Activated T-helper 2 cell treated with anti-CD3 and anti-CD28 coated beads, Interferon-gamma antibody, Interleukin-2, Interleukin-4, amounts not matched to agents 10 μg/mL and 5 μg/mL and 100 μg/mL, durations not matched to agents 14 hours and 24 hours and 36 hours (primary cell): ENCODE measurements at regions of chr3 and their contacts with region 1.

Region 1: DNA sequence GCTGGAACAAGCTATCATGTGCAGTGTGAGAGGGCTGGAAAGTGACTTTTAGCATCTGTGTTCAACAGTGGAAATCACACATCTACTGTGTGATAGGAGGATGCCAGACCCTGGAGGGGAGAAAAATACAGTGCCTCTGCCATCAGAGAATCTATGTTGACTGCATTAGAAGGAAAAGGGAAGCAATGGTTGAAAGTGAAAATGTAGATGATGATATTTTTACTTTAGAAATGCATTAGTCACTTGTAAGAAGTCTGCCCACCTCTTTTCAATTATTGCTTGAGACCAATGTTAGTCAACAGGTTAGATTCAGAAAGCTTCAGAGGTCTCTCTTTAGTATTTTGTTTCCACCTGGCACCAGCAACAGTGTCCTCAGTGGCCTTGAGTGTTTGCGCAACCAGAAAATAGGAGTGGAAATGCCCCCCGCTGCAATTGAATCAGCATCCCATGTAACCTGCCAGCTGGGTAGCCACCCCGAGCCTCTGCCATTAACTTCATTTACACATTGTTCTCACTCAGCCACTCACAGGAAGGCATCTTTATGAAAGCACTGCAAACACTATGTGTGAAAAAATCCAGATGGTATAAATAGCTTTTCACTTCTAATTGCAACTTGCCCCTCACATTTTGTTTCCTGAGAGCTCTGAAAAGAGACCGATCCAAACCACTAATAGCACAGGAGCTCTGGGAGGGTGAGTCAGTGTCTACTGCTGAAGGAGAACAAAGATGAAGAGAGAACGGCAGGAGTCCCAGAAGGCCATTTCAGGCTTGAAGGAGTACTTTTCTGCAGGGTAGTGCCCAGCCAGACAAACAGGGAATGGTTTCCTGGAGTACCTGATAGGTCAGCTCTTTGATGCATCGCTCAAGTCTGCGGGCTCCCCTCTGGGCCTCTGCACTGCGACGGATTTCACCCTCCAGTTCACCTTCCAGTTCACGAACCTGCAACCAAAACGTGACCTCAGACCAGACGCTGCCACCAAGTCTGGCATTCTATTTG is 92.1 kb downstream of the HHLA2 start:
- DNase-seq: no peak
- H3K4me3 Mint-ChIP-seq: no peak overlapping the region
- H3K27ac Mint-ChIP-seq: peak overlapping the region; percentile 67
- H3K4me1 Mint-ChIP-seq: peaks cover 23% of the 10 kb centered on the region
- H3K27me3 Mint-ChIP-seq: peaks cover 19% of the 10 kb centered on the region

Region 2: DNA sequence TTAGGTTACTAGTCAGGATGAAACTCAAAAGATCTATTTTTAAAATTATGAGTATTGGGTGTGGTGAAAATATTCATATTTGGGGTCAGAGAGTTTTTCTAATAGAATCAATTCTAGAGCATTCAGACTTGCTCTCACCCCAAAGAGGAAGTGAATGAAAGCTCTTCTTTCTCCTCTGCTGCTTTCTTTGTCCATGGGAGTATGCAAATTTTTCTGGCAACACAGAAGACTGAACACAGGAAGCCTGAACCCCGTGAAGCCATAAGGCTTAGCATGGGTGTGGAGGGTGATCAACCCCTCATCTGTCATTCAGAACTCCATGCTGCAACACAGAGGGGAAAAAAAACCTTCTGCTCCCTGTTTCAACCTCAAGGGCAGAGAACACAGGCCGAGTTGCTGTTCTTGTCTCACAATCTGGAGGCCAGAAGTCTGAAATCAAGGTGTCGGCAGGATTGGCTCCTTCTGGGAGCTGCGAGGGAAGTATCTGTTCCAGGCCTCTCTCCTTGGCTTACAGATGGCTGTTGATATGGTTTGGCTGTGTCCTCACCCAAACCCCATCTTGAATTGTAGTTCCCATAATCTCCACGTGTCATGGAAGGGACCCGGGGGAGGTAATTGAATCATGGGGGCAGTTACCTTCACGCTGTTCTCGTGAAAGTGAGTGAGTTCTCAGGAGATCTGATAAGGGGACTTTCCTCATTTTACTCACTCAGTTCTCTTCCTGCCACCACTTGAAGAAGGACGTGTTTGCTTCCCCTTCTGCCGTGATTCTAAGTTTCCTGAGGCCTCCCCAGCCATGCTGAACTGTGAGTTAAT is 263.9 kb before region 1 on chr3:
- intact Hi-C with region 1: loop called (anchors 2 kb)
- DNase-seq: peak; percentile 68
- H3K4me3 Mint-ChIP-seq: peak overlapping the region; percentile 96
- H3K27ac Mint-ChIP-seq: peak overlapping the region; percentile 99
- H3K4me1 Mint-ChIP-seq: peaks cover 66% of the 10 kb centered on the region
- H3K27me3 Mint-ChIP-seq: no peaks in the 10 kb centered on the region

Region 3: DNA sequence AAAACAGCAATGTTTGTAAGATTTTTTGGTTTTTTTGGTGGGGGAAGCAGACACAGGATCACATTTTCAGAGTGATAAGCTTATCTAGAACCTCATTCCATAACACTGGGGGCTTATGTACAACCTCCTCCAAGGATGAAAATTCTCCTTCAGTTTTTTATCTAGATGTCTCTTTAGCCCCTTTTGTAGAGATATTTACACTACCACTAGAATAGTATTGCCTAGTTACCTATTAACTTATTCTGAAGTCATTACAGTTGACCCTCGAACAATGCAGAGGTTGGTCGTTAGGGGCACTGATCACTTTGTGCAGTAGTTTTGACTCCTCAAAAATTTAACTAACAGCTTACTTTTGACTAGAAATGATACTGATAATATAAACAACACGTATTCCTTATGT is 199.0 kb before region 1 on chr3:
- intact Hi-C with region 1: no loop called
- DNase-seq: no peak
- H3K4me3 Mint-ChIP-seq: no peak overlapping the region
- H3K27ac Mint-ChIP-seq: no peak overlapping the region
- H3K4me1 Mint-ChIP-seq: no peaks in the 10 kb centered on the region
- H3K27me3 Mint-ChIP-seq: no peaks in the 10 kb centered on the region

Region 4: GRCh38 chr3:108292905-108293328 is 95.5 kb before region 1 on chr3:
- intact Hi-C with region 1: loop called (anchors 1 kb)
- DNase-seq: no peak
- H3K4me3 Mint-ChIP-seq: no peak overlapping the region
- H3K27ac Mint-ChIP-seq: peak overlapping the region; percentile 80
- H3K4me1 Mint-ChIP-seq: peaks cover 60% of the 10 kb centered on the region
- H3K27me3 Mint-ChIP-seq: no peaks in the 10 kb centered on the region

Region 5: GRCh38 chr3:108328821-108329486 is 59.5 kb before region 1 on chr3:
- intact Hi-C with region 1: loop called (anchors 1 kb)
- DNase-seq: no peak
- H3K4me3 Mint-ChIP-seq: no peak overlapping the region
- H3K27ac Mint-ChIP-seq: peak overlapping the region; percentile 15
- H3K4me1 Mint-ChIP-seq: peaks cover 40% of the 10 kb centered on the region
- H3K27me3 Mint-ChIP-seq: no peaks in the 10 kb centered on the region

Region 6: DNA sequence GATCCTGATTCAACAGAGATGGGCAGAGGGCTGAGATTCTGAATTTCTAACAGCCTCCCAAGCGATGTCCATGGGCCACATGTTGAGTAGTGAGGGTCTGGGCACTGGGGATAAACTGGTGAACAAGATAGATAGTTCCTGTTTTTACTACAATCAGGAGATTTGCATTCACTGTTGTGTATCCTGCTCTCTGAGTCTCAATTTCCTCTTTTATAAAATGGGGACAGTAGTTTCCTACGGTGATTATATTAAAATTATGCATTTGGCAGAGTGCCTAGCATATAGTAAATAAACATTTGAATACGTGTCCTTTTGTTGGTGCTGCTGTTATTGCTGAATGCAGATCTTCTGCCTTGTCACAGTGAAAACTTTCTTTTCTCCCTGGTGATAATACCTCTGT is 19.5 kb after region 1 on chr3:
- intact Hi-C with region 1: no loop called
- DNase-seq: no peak
- H3K4me3 Mint-ChIP-seq: no peak overlapping the region
- H3K27ac Mint-ChIP-seq: no peak overlapping the region
- H3K4me1 Mint-ChIP-seq: peaks cover 7% of the 10 kb centered on the region
- H3K27me3 Mint-ChIP-seq: peaks cover 7% of the 10 kb centered on the region

Region 7: DNA sequence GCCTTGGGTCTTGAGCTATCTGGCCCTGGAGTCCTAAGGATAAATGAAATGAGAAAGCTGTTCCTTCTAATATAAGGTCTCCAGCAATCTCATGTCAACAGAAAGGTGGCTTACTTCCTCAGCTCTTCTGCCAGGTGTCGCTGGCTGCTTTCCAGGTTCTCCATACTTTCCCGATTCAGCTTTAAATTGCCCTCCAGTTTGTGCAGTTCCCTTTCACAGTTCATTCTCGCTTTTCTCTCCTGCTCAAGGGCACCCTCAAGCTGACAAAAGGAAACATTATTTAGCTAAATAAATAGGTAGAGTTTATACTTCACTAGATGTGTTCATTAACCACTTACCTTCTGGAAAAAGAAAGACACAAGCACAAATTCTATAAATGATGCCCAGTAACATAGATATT is 49.0 kb after region 1 on chr3:
- intact Hi-C with region 1: no loop called
- DNase-seq: no peak
- H3K4me3 Mint-ChIP-seq: no peak overlapping the region
- H3K27ac Mint-ChIP-seq: no peak overlapping the region
- H3K4me1 Mint-ChIP-seq: no peaks in the 10 kb centered on the region
- H3K27me3 Mint-ChIP-seq: peaks cover 3% of the 10 kb centered on the region